Calu3 (cell line): ENCODE measurements at regions of chr1 and their contacts with region 1.

Region 1: GRCh38 chr1:225603538-225604354 is 49.2 kb downstream of the ENAH start:
- DNase-seq: peak; percentile 27
- H3K4me3 Mint-ChIP-seq: peak overlapping the region; percentile 47
- H3K27ac Mint-ChIP-seq: peak overlapping the region; percentile 74
- H3K4me1 Mint-ChIP-seq: peaks cover 61% of the 10 kb centered on the region
- H3K27me3 Mint-ChIP-seq: no peaks in the 10 kb centered on the region
- CTCF ChIP-seq: no peak

Region 2: DNA sequence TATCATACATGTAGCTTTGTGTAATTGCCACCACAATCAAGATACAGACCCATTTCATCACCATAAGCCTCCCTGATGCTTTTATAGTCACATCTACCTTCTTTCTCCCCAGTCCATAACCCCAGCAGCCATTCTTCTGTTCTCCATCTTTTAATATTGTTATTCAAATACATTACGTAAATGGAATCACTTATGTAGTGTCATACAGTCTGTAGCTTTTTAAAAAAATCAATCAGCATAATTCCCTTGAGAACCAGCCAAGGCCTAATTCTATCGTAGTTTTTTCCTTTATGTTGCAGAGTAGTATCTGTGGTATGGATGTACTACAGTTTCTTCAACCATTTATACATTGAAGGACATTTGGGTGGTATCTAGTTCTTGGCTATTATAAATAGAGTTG is 1137.6 kb before region 1 on chr1:
- CTCF ChIA-PET with region 1: no interaction called
- intact Hi-C with region 1: no loop called
- DNase-seq: no peak
- H3K4me3 Mint-ChIP-seq: no peak overlapping the region
- H3K27ac Mint-ChIP-seq: no peak overlapping the region
- H3K4me1 Mint-ChIP-seq: no peaks in the 10 kb centered on the region
- H3K27me3 Mint-ChIP-seq: no peaks in the 10 kb centered on the region
- CTCF ChIP-seq: no peak

Region 3: GRCh38 chr1:225454733-225455132 is 149.0 kb before region 1 on chr1:
- CTCF ChIA-PET with region 1: no interaction called
- intact Hi-C with region 1: no loop called
- DNase-seq: peak; percentile 76
- H3K4me3 Mint-ChIP-seq: peak overlapping the region; percentile 24
- H3K27ac Mint-ChIP-seq: peak overlapping the region; percentile 79
- H3K4me1 Mint-ChIP-seq: peaks cover 63% of the 10 kb centered on the region
- H3K27me3 Mint-ChIP-seq: no peaks in the 10 kb centered on the region
- CTCF ChIP-seq: no peak

Region 4: GRCh38 chr1:225567590-225568194 is 36.1 kb before region 1 on chr1:
- CTCF ChIA-PET with region 1: no interaction called
- intact Hi-C with region 1: no loop called
- DNase-seq: no peak
- H3K4me3 Mint-ChIP-seq: no peak overlapping the region
- H3K27ac Mint-ChIP-seq: no peak overlapping the region
- H3K4me1 Mint-ChIP-seq: no peaks in the 10 kb centered on the region
- H3K27me3 Mint-ChIP-seq: no peaks in the 10 kb centered on the region
- CTCF ChIP-seq: no peak

Region 5: GRCh38 chr1:225642177-225642576 is 38.4 kb after region 1 on chr1:
- CTCF ChIA-PET with region 1: no interaction called
- intact Hi-C with region 1: no loop called
- DNase-seq: no peak
- H3K4me3 Mint-ChIP-seq: no peak overlapping the region
- H3K27ac Mint-ChIP-seq: no peak overlapping the region
- H3K4me1 Mint-ChIP-seq: no peaks in the 10 kb centered on the region
- H3K27me3 Mint-ChIP-seq: no peaks in the 10 kb centered on the region
- CTCF ChIP-seq: no peak

Region 6: DNA sequence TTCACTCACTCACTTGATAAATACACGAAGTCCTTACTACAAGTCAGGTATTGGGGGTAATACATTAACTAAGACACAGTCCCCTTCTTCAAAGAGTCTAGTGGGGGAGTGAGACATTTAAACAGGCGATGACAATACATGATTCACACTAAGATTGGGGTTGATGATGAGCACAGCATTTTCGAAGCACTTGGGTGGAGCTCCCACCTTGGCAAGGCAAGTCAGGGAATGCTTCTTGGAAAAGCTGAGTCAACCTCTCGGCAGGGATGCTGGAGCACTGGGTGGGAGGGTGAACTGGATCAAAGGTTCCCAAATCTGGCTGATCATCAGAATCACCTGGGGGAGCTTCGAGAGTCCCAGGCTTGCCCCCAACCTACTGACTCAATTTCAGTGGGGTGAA is 107.1 kb after region 1 on chr1:
- CTCF ChIA-PET with region 1: interaction called, 11 read pairs
- intact Hi-C with region 1: no loop called
- DNase-seq: no peak
- H3K4me3 Mint-ChIP-seq: no peak overlapping the region
- H3K27ac Mint-ChIP-seq: no peak overlapping the region
- H3K4me1 Mint-ChIP-seq: peaks cover 8% of the 10 kb centered on the region
- H3K27me3 Mint-ChIP-seq: no peaks in the 10 kb centered on the region
- CTCF ChIP-seq: no peak